ENCODE measurements at regions of chr20 and their contacts with region 1.

Region 1: DNA sequence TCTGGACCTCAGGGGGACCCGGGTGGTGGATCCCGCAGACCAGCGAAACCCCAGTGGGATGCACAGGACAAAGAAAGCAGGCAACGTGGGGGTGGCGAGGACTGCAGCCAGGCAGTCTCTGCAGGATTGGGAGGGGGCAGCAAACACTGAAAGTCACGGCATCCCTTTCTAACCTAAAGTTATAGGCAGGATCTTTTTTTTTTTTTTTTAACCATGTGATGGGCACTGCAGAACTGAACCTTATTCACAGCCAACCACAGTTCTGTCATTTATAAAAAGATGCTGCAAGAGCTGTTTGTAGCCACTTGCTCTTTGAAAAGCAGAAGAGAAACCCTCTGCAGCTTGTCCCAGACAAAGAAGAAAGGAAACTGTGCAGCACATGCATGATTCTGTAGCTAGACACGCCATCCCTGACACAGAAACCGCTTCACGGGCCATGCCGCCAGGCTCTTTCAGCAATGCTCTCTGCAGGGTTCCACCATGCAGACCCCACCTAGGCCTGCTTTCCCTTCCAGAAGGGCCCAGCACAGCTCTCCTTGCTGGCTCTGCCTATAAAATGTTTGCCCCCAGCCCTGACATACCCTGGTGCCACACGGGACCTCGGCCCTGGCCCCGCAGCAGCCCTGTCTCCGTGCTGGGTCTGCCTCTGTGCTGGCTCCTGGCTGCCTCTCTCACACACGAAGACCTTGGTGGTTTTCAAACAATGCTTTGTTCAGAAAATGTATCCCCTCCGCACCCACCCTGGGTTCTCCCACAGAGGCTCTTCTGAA is 70.8 kb downstream of the PYGB start:
- DNase-seq: no peak
- H3K4me3 ChIP-seq: no peak overlapping the region
- H3K27ac ChIP-seq: no peak overlapping the region
- H3K4me1 ChIP-seq: peaks cover 0 to 1% (median 0%) of the 10 kb centered on the region in 4 experiments; a peak in 1 of 7 replicates
- H3K27me3 ChIP-seq: no peaks in the 10 kb centered on the region
- CTCF ChIP-seq: no peak
- EP300 ChIP-seq: no peak
- POLR2A ChIP-seq: no peak
- RAD21 ChIP-seq: no peak

Region 2: GRCh38 chr20:25254986-25255680 is 63.5 kb before region 1 on chr20:
- CTCF ChIA-PET with region 1: no interaction called
- POLR2A ChIA-PET with region 1: no interaction called
- DNase-seq: no peak
- H3K4me3 ChIP-seq: no peak overlapping the region
- H3K27ac ChIP-seq: no peak overlapping the region
- H3K4me1 ChIP-seq: no peaks in the 10 kb centered on the region
- H3K27me3 ChIP-seq: no peaks in the 10 kb centered on the region
- CTCF ChIP-seq: no peak
- EP300 ChIP-seq: no peak
- POLR2A ChIP-seq: no peak
- RAD21 ChIP-seq: no peak

Region 3: DNA sequence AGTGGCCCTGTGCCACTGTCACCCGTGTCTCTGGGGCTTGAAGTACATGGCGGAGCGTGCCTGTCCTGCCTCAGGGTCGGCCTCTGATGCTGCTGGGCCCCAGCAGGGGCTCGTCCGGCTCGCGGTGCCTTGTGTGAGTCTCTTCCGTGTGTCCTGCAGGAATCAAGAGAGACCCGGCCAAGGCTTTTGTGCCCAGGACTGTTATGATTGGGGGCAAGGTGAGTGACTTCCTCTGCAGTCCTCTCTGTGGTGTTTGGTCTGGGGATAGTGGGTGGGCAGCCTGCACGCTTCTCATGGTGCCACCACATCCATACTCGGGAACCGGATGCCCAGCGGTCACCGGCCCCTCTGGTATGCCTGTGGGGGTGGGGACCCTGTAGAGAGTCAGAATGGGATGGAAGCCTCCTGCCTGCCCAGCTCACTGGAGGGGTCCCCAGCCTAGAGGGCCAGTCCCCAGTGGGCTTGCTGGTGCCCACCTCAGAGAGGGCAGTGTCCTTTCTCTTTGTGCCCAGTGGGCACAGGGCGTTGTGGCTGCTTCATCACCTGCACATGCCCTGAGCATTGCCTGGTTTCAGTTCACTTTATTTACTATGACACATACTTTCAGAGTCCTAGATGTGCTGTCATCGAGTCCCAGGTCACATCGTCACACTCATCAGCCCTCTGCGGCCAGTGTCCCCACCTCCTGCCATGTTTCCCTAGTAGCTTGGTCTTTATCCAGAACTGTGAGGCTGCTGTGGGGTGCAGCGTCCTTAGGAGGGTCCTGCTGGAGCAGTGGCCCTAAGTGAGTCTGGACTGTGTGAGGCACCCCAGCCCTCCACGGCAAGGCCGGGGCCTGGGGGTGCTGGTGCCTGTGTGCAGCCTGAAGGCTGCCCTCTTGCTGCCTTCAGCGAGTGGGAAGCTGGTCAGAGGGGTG is 30.1 kb before region 1 on chr20:
- CTCF ChIA-PET with region 1: no interaction called
- POLR2A ChIA-PET with region 1: no interaction called
- DNase-seq: no peak
- H3K4me3 ChIP-seq: no peak overlapping the region
- H3K27ac ChIP-seq: no peak overlapping the region
- H3K4me1 ChIP-seq: no peaks in the 10 kb centered on the region
- H3K27me3 ChIP-seq: no peaks in the 10 kb centered on the region
- CTCF ChIP-seq: no peak
- EP300 ChIP-seq: no peak
- POLR2A ChIP-seq: no peak
- RAD21 ChIP-seq: no peak

Region 4: GRCh38 chr20:25299806-25300205 is 18.9 kb before region 1 on chr20:
- CTCF ChIA-PET with region 1: interaction called, 16 read pairs
- POLR2A ChIA-PET with region 1: no interaction called
- DNase-seq: no peak
- H3K4me3 ChIP-seq: no peak overlapping the region
- H3K27ac ChIP-seq: no peak overlapping the region
- H3K4me1 ChIP-seq: peaks cover 0 to 7% (median 2%) of the 10 kb centered on the region in 4 experiments; a peak in 3 of 7 replicates
- H3K27me3 ChIP-seq: no peaks in the 10 kb centered on the region; a peak in 1 of 7 replicates
- CTCF ChIP-seq: no peak
- EP300 ChIP-seq: no peak
- POLR2A ChIP-seq: no peak
- RAD21 ChIP-seq: no peak; a peak in 1 of 4 replicates

Region 5: DNA sequence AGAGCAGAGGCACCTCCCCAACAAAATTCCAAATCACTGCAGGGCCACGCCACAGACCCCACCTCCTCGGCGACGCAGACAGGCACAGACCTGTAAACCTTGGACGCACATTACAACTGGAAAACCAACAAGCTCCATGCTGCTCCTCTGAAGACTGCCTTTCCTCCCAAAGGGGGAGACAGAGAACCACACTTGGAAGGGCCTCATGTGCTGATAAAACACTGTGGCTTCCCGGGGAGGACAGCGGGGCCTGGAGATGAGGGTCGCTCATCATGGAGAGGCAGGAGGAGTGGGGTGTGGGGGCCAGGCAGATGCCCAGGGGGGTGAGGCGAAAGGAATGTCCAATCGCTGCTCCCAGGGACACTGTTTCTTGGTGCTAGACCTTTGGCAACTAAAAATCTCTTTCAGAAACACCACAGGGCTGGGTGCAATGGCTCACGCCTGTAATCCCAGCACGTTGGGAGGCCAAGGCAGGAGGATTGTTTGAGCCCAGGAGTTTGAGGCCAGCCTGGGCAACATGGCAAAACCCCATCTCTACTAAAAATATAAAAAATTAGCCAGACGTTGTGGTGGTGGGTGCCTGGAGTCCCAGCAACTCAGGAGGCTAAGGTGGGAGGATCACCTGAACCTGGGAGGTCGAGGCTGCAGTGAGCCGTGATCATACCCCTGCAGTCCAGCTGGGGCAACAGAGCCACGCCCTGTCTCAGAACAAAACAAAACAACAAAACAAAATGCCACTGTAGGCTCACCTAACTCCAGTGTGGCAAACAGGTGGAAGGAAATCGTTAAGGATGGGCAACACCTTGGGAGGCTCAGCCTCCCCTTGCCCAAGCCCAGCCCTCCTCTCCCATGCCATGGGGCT is 18.1 kb after region 1 on chr20:
- CTCF ChIA-PET with region 1: interaction called, 11 read pairs
- POLR2A ChIA-PET with region 1: no interaction called
- DNase-seq: peak; percentile 38 to 57
- H3K4me3 ChIP-seq: no peak overlapping the region
- H3K27ac ChIP-seq: no peak overlapping the region
- H3K4me1 ChIP-seq: peaks cover 0 to 9% (median 4%) of the 10 kb centered on the region in 4 experiments; a peak in 4 of 7 replicates
- H3K27me3 ChIP-seq: no peaks in the 10 kb centered on the region
- CTCF ChIP-seq: peak; percentile 58 to 76 (median 71)
- EP300 ChIP-seq: no peak
- POLR2A ChIP-seq: no peak
- RAD21 ChIP-seq: peak; percentile 83 to 91

Measured in H1 (cell line).